Activated naive CD4-positive, alpha-beta T cell treated with anti-CD3 and anti-CD28 coated beads, Interleukin-2, amount 10 ng/mL, durations not matched to agents 7 days and 5 days (primary cell): ENCODE measurements at regions of chr20 and their contacts with region 1.

Region 1: DNA sequence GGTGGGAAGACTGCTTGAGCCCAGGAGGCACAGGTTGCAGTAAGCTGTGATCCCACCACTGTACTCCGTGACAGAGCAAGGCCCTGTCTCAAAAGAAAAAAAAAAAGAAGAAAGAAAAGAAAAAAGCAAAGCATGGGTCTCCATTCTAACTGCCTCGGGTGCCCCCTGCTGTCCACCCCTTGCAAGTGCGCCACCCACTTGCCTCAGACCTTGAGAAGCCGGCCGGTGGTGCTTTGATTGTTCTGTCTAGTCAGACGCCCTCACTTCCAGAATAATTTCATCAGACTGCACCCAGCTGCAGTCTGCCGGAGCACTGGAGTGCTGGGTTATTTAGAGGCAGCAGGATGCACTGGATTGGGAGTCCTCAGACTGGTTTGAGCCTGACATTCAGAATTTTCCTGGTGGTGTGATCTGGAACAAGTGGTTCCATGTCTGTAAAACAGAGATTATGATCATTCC is 17.6 kb upstream of the TM9SF4 start:
- DNase-seq: peak; percentile 87
- H3K4me3 Mint-ChIP-seq: no peak overlapping the region
- H3K27ac Mint-ChIP-seq: no peak overlapping the region
- H3K4me1 Mint-ChIP-seq: no peaks in the 10 kb centered on the region
- H3K27me3 Mint-ChIP-seq: peaks cover 37% of the 10 kb centered on the region

Region 2: DNA sequence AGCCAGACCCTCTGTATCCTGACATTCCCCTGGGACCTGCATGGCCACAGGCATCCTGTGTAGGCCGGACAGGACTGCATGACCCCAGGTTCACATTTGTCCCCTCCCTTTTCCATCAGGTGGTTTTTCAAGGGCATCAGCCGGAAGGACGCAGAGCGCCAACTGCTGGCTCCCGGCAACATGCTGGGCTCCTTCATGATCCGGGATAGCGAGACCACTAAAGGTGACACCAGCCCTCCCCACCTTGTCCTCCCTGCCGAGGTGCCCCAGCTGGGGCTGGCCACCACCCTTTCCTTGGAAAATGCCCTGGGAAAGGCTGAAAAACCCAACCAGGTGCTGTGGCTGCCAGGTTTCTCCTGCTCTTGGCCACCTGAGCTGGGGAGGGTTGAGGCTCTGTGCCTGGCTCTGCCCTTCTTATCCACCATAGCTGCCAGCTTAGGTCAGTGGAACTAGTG is 12.2 kb before region 1 on chr20:
- CTCF ChIA-PET with region 1: interaction called, 17 read pairs
- DNase-seq: no peak
- H3K4me3 Mint-ChIP-seq: no peak overlapping the region
- H3K27ac Mint-ChIP-seq: no peak overlapping the region
- H3K4me1 Mint-ChIP-seq: no peaks in the 10 kb centered on the region
- H3K27me3 Mint-ChIP-seq: peaks cover 61% of the 10 kb centered on the region